Activated T-helper 1 cell treated with anti-CD3 and anti-CD28 coated beads, Interleukin-12 subunit alpha, Interleukin-12 subunit beta, Interleukin-2, Interleukin-4 antibody, amounts not matched to agents 30 ng/mL and 10 ng/mL and 1 ng/mL, durations not matched to agents 14 hours and 24 hours and 36 hours (primary cell): ENCODE measurements at regions of chr3 and their contacts with region 1.

Region 1: DNA sequence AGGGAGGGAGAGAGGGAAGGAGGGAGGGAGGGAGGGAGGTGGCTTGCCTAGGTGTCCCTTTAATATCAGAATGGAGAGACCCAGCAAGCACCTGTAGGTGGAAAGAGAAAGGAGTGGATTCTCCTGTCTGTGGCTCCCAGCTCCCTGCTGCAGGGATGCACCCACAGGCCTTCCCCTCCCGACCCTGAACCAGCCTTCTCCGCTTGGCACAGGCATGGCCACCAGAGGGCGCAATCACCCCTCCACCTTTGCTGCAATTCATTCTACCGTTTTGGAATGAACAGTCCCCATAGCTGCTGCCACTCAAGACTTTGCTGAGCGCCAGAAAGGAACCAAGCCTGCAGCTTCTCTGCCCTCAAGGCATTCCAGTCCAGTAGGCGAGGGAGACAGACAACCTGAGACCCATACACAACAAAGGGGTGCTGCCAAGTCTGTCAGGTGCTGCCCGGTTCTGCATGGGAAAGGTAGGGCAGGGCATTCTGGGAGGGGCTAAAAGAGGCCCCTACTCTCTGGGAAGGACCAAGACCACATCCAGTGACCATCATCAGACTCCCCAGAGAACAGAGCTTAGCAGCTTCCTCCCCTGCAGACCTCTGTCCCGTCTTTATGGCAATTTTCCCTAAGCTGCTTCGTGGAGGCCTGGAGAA is 4.9 kb downstream of the TLR9 start:
- DNase-seq: peak; percentile 78
- H3K4me3 Mint-ChIP-seq: peak overlapping the region; percentile 30
- H3K27ac Mint-ChIP-seq: peak overlapping the region; percentile 55
- H3K4me1 Mint-ChIP-seq: peaks cover 89% of the 10 kb centered on the region
- H3K27me3 Mint-ChIP-seq: no peaks in the 10 kb centered on the region

Region 2: GRCh38 chr3:52001443-52001974 is 219.0 kb before region 1 on chr3:
- intact Hi-C with region 1: loop called (anchors 5 kb)
- DNase-seq: peak; percentile 77
- H3K4me3 Mint-ChIP-seq: no peak overlapping the region
- H3K27ac Mint-ChIP-seq: no peak overlapping the region
- H3K4me1 Mint-ChIP-seq: peaks cover 7% of the 10 kb centered on the region
- H3K27me3 Mint-ChIP-seq: peaks cover 9% of the 10 kb centered on the region

Region 3: DNA sequence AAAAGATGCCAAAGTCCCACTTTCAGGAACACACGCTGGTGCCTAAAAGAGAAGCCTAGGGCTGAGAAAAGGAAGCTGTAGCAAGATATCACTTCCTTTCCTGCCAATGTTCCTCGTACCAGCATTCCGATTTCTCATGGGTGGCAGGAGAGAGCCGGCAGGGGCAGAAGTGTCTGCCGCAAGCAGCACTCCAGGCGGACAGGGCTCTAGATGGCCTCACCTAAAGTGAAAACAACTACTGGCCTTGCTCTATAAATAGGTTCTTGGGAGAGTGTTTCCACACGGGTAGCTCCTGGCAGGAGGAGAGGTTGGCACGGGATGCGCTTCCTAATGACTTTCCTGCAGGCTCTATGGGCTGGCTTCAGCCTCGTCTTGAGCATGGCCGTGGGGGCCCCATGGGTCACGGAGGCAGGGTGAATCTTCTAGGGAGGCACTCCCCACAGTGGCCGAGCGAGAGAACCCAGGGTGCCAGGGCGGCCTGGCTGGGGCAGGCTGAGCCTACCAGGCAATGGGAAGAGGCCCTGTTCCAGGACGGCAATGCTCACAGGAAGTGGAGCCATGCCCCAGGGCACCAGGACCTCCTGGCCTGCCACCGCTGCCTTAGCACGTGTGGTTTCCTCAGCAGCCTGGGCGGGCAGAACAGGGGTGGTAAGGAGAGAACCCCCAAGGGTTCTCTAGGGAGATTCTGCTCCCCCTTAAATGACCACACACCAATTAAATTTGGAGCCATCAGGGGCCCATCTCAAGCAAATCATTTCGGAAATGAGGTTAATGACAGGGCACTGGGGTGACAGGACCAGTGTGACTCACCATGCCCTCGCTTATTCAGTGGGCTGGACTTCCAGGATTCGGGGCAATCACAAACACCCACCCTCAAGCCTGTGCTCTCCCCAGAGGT is 149.5 kb before region 1 on chr3:
- intact Hi-C with region 1: no loop called
- DNase-seq: no peak
- H3K4me3 Mint-ChIP-seq: no peak overlapping the region
- H3K27ac Mint-ChIP-seq: no peak overlapping the region
- H3K4me1 Mint-ChIP-seq: no peaks in the 10 kb centered on the region
- H3K27me3 Mint-ChIP-seq: no peaks in the 10 kb centered on the region

Region 4: DNA sequence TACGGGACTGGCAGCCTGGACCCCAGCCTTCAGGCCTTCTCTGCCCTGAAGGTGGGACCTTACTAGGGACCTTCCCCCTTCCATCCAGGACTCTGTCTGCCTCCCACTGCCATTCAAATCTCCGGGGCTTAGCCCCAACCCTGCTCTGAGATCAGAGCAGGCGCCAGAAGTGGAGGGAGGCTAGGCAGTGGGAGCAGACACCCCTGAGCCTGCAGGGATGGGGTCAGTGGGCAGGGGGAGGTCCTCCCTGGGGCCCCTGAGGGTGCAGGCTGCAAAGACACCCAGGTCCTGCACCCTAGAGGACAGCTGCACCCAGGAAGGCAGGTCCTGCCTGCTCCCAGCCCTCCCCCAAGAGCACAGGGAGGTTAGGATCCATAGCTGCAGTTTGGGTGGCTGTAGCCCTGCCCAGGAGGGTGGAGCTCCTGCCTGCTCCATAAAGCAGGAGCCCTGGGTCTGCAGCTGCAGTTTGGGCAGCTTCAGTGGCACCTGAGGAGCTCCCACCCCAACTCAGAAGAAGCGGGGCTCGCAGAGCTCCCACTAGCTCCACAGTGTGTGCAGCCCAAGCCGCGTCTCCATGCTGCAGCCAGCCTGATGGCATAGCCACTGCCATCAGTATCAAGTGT is 58.1 kb before region 1 on chr3:
- intact Hi-C with region 1: no loop called
- DNase-seq: no peak
- H3K4me3 Mint-ChIP-seq: no peak overlapping the region
- H3K27ac Mint-ChIP-seq: no peak overlapping the region
- H3K4me1 Mint-ChIP-seq: peaks cover 4% of the 10 kb centered on the region
- H3K27me3 Mint-ChIP-seq: peaks cover 16% of the 10 kb centered on the region

Region 5: GRCh38 chr3:52197842-52198668 is 22.4 kb before region 1 on chr3 and contains the start of gene ALAS1:
- intact Hi-C with region 1: loop called (anchors 1 kb)
- DNase-seq: peak; percentile 96
- H3K4me3 Mint-ChIP-seq: peak within 1 kb of the TSS; percentile 100
- H3K27ac Mint-ChIP-seq: peak within 1 kb of the TSS; percentile 94
- H3K4me1 Mint-ChIP-seq: peaks cover 63% of the 10 kb centered on the region
- H3K27me3 Mint-ChIP-seq: peaks cover 2% of the 10 kb centered on the region
- total RNA-seq, gene ALAS1: 105 and 110 TPM in 2 replicates

Region 6: DNA sequence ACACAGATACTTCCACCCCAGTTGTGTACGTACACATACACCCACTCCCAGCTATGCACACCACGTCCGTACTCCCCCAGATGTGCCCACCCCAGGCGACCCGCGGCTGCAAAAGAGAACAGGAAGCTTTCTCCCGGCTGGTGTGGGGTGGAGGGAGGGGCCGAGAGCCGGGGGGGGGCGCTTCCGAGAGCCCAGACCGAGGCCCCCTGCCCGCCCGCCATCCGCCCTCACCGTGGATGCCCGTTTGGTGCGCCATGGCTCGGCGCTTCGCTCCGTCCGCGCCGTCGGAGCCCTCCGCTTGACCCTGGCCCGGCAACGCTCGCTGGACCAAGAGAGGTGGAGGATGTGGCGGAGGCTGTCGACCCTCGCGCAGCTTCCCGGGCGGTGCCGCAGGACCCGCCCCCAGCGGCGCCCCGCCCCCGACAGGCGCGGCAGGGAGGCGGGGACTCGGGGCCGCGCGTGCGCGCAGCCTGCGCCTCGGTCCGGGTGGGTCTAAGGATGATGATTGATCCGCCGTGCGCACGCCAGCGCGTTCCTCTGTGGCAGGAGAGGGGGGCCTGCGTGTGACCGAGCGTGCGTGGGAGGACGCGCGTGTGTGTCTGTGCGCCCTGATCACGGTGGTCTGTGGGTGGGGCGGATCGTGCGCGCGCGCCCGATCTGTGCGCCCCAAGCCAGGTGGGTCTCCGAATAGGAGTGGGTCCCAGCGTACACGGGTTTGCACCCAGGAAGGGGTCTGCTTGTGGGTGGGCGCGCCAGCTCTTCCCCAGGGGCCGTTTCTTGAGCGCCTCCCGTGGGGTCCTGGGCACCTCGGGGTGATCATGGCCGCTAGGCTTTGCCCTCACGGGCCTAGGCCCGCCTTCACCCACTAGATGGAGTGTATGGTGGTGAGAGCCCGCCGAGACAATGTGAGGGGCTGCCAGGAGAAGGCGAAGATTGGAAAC is 18.5 kb after region 1 on chr3 and contains the start of gene TWF2:
- intact Hi-C with region 1: loop called (anchors 1 kb)
- DNase-seq: peak; percentile 87
- H3K4me3 Mint-ChIP-seq: peak within 1 kb of the TSS; percentile 95
- H3K27ac Mint-ChIP-seq: peak within 1 kb of the TSS; percentile 98
- H3K4me1 Mint-ChIP-seq: peaks cover 75% of the 10 kb centered on the region
- H3K27me3 Mint-ChIP-seq: no peaks in the 10 kb centered on the region
- total RNA-seq, gene TWF2: 94.3 and 98.6 TPM in 2 replicates

Region 7: DNA sequence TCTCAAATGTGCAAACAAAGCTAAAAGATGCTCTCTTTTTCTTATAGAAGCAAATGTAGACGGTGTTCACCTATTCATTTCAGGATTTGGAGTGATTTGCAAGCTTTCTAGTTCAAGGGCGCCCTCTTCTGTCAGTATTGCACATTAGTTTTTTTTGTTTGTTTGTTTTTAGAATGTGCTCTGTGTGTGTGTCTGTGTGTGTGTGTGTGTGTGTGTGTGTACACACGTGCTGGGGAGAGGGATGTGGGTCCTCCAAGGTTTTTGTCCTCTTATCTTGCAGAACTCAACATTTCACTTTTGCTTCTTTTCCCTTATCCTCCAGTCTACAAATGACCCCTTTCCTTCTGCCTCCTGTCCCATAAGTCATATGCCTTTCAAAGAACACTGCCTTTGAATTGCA is 119.1 kb after region 1 on chr3:
- intact Hi-C with region 1: loop called (anchors 1 kb)
- DNase-seq: peak; percentile 40
- H3K4me3 Mint-ChIP-seq: no peak overlapping the region
- H3K27ac Mint-ChIP-seq: no peak overlapping the region
- H3K4me1 Mint-ChIP-seq: no peaks in the 10 kb centered on the region
- H3K27me3 Mint-ChIP-seq: no peaks in the 10 kb centered on the region

Region 8: GRCh38 chr3:52444860-52445793 is 224.6 kb after region 1 on chr3 and contains the start of gene SEMA3G:
- intact Hi-C with region 1: loop called (anchors 5 kb)
- DNase-seq: peak; percentile 70
- H3K4me3 Mint-ChIP-seq: no peak within 1 kb of the TSS
- H3K27ac Mint-ChIP-seq: no peak within 1 kb of the TSS
- H3K4me1 Mint-ChIP-seq: peaks cover 7% of the 10 kb centered on the region
- H3K27me3 Mint-ChIP-seq: no peaks in the 10 kb centered on the region
- total RNA-seq, gene SEMA3G: 0.13 TPM in 1 of 2 replicates, not detected in the other